ENCODE measurements at regions of chr7 and their contacts with region 1.

Region 1: GRCh38 chr7:22278660-22279059 is 78.3 kb downstream of the RAPGEF5 start:
- DNase-seq: no peak
- H3K4me3 Mint-ChIP-seq: no peak overlapping the region
- H3K27ac Mint-ChIP-seq: no peak overlapping the region
- H3K4me1 Mint-ChIP-seq: no peaks in the 10 kb centered on the region
- H3K27me3 Mint-ChIP-seq: peaks cover 6% of the 10 kb centered on the region

Region 2: GRCh38 chr7:22074897-22075296 is 203.8 kb before region 1 on chr7:
- intact Hi-C with region 1: no loop called
- DNase-seq: no peak
- H3K4me3 Mint-ChIP-seq: no peak overlapping the region
- H3K27ac Mint-ChIP-seq: no peak overlapping the region
- H3K4me1 Mint-ChIP-seq: no peaks in the 10 kb centered on the region
- H3K27me3 Mint-ChIP-seq: peaks cover 12% of the 10 kb centered on the region

Region 3: DNA sequence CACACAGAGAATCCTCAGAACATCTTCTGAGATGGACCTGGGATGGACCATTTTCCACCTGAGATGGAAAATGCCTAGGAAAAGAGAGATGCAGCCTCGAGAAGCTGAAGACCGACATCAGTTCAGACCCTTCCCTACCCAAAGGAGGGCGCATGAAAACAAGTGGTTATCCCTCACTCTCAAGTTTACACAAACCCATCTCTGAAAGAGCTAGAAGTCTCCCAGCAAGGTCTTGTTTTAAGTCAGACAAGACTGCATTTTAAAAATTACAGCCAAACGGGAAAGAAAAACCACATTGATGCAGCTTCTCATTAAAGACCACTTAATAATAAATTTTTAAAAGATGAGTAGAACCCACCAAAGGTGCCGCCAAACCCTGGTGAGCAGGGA is 77.0 kb after region 1 on chr7:
- intact Hi-C with region 1: loop called (anchors 2 kb)
- DNase-seq: no peak
- H3K4me3 Mint-ChIP-seq: peak overlapping the region; percentile 13
- H3K27ac Mint-ChIP-seq: no peak overlapping the region
- H3K4me1 Mint-ChIP-seq: no peaks in the 10 kb centered on the region
- H3K27me3 Mint-ChIP-seq: peaks cover 55% of the 10 kb centered on the region